Activated CD4-positive, alpha-beta T cell treated with anti-CD3 and anti-CD28 coated beads for 36 hours (primary cell): ENCODE measurements at regions of chr15 and their contacts with region 1.

Region 1: GRCh38 chr15:75903331-75904239 is at the start of gene FBXO22:
- DNase-seq: peak; percentile 97
- ATAC-seq: peak; percentile 97
- H3K4me3 Mint-ChIP-seq: peak within 1 kb of the TSS; percentile 97
- H3K27ac Mint-ChIP-seq: peak within 1 kb of the TSS; percentile 98
- H3K4me1 Mint-ChIP-seq: peaks cover 40% of the 10 kb centered on the region
- H3K27me3 Mint-ChIP-seq: no peaks in the 10 kb centered on the region
- total RNA-seq, gene FBXO22: 51.4 to 59.2 TPM

Region 2: DNA sequence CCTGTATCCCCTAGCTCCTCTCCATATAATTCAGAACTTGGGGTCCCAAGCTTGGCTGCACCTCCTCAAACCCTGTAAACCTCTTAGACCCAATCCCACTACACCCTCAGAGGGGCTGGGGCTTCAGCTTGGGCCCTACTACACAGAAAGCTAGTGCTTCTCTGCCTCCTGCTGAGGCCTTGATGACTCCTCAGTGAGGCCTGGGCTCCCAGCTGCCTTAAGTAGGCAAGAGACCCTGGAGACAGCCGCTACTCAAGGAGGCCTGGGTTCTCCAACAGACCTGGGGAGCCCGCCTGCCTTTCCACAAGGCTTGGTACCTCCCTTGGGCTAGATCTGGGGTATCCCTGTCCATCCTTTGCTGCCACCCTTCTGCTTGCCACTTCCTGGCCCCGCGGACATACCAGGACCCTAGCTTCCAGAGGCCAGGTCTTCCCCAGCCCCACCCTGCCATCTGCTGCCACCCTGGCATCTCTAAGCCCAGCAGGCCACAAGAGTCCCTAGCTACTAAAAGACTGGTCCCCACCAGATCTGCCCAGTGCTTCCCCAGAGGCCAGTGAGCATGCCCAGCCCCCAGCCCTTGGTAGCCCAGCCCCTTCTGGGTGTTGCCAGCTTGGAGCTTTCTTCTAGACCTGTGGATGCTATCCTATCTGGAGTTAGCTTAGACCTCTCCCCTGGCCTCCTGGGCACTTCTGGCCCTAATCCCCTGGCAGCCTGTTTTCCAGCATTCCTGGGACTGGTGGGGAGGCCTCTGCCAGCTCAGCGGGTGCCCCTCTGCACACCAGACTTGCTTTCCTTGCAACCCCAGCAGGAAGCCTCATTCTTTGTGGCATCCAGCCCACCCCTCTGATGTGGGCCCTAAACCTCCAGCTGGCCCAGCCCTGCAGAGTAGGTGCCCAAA is 688.2 kb before region 1 on chr15:
- CTCF ChIA-PET with region 1: no interaction called
- POLR2A ChIA-PET with region 1: no interaction called
- intact Hi-C with region 1: no loop called
- DNase-seq: no peak
- ATAC-seq: no peak
- H3K4me3 Mint-ChIP-seq: no peak overlapping the region
- H3K27ac Mint-ChIP-seq: peak overlapping the region; percentile 25
- H3K4me1 Mint-ChIP-seq: peaks cover 2% of the 10 kb centered on the region
- H3K27me3 Mint-ChIP-seq: no peaks in the 10 kb centered on the region

Region 3: GRCh38 chr15:75758071-75758872 is 145.3 kb before region 1 on chr15:
- CTCF ChIA-PET with region 1: no interaction called
- POLR2A ChIA-PET with region 1: no interaction called
- intact Hi-C with region 1: loop called in 1 of 2 experiments (anchors 5 kb)
- DNase-seq: peak; percentile 81
- ATAC-seq: peak; percentile 95
- H3K4me3 Mint-ChIP-seq: peak overlapping the region; percentile 85
- H3K27ac Mint-ChIP-seq: peak overlapping the region; percentile 89
- H3K4me1 Mint-ChIP-seq: peaks cover 14% of the 10 kb centered on the region
- H3K27me3 Mint-ChIP-seq: no peaks in the 10 kb centered on the region

Region 4: GRCh38 chr15:76253691-76254473 is 350.3 kb after region 1 on chr15:
- CTCF ChIA-PET with region 1: no interaction called
- POLR2A ChIA-PET with region 1: no interaction called
- intact Hi-C with region 1: no loop called
- DNase-seq: no peak
- ATAC-seq: no peak
- H3K4me3 Mint-ChIP-seq: no peak overlapping the region
- H3K27ac Mint-ChIP-seq: no peak overlapping the region
- H3K4me1 Mint-ChIP-seq: peaks cover 3% of the 10 kb centered on the region
- H3K27me3 Mint-ChIP-seq: no peaks in the 10 kb centered on the region

Region 5: GRCh38 chr15:76730262-76730661 is 826.7 kb after region 1 on chr15:
- CTCF ChIA-PET with region 1: no interaction called
- POLR2A ChIA-PET with region 1: no interaction called
- intact Hi-C with region 1: no loop called
- DNase-seq: no peak
- ATAC-seq: no peak
- H3K4me3 Mint-ChIP-seq: no peak overlapping the region
- H3K27ac Mint-ChIP-seq: no peak overlapping the region
- H3K4me1 Mint-ChIP-seq: no peaks in the 10 kb centered on the region
- H3K27me3 Mint-ChIP-seq: no peaks in the 10 kb centered on the region